ENCODE measurements at regions of chr17 and their contacts with region 1.

Region 1: DNA sequence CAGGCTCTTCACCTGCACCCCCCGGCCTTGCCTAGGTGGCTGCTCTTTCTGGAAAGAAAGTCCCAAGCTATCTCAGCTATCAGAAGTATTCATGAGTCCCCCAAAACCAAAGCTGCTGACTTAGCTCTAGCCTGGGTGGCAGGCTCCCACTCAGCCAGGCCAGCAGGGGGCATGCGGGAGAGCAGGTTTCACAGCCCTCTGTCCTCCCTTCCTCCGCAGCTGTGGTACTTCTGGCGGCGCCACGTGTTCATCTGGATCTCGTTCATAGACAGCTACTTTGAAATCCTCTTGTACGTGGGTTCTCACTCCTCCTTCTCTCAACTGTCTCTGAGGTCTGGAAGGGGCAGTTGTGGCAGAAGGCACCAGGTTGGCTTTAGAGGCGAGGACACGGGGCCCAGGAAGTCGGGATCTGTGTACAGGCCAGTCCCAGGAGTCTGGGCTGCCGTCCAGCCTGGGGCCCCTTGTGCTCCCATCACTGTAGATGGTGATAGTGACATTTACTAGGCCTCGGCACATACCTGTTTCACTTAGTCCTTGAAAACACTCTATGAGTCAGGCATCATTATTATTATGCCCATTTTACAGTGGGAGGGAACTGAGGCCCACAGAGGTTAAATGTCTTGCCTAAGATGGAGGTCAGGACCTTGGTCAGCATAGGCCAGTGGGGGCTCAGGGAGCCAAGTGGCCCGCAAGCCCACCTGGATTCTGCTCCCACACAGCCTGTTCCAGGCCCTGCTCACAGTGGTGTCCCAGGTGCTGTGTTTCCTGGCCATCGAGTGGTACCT is 12.9 kb downstream of the TRPV2 start:
- DNase-seq: peak; percentile 64
- H3K4me3 Mint-ChIP-seq: no peak overlapping the region
- H3K27ac Mint-ChIP-seq: no peak overlapping the region
- H3K4me1 Mint-ChIP-seq: peaks cover 2% of the 10 kb centered on the region
- H3K27me3 Mint-ChIP-seq: no peaks in the 10 kb centered on the region

Region 2: GRCh38 chr17:16380640-16381495 is 47.4 kb before region 1 on chr17 and contains the start of gene UBB:
- CTCF ChIA-PET with region 1: no interaction called
- intact Hi-C with region 1: no loop called
- DNase-seq: peak; percentile 96
- H3K4me3 Mint-ChIP-seq: peak within 1 kb of the TSS; percentile 90
- H3K27ac Mint-ChIP-seq: peak within 1 kb of the TSS; percentile 96
- H3K4me1 Mint-ChIP-seq: peaks cover 35% of the 10 kb centered on the region
- H3K27me3 Mint-ChIP-seq: no peaks in the 10 kb centered on the region
- total RNA-seq, gene UBB: 1,579 to 1,628 TPM

Region 3: DNA sequence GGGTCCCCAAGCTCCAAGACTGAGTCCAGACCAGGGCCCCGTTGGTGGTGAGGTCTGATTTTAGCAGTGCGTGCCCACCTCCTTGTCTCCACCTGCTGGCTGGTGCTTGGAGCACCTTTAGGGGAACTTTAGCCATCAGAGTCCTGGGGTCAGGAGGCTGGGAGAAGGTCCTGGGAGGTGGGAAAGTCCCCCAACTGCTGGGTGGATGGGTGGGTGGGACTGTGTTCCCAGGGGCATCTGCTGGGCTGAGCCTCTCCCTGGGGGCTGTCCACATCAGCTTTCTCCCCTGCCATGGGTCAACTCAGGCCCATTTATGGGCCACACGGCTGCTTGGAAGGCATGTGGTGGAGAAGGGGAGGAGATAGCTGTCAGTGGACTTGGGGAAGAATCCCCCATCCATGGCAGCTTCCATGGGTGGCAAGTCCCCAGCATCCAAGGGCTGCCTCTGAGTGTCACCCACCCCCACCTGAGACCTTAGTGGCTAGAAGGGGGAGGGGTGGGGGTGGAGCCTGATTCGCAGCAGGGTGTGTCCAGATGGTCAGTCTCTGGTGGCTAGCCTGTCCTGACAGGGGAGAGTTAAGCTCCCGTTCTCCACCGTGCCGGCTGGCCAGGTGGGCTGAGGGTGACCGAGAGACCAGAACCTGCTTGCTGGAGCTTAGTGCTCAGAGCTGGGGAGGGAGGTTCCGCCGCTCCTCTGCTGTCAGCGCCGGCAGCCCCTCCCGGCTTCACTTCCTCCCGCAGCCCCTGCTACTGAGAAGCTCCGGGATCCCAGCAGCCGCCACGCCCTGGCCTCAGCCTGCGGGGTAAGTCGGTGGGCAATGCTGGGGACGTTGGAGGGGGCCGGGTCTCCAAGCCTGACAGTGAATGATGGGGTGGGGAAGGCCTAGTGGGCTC is 13.0 kb before region 1 on chr17 and contains the start of gene TRPV2:
- CTCF ChIA-PET with region 1: interaction called, 13 read pairs
- intact Hi-C with region 1: no loop called
- DNase-seq: peak; percentile 67
- H3K4me3 Mint-ChIP-seq: peak within 1 kb of the TSS; percentile 98
- H3K27ac Mint-ChIP-seq: peak within 1 kb of the TSS; percentile 100
- H3K4me1 Mint-ChIP-seq: peaks cover 43% of the 10 kb centered on the region
- H3K27me3 Mint-ChIP-seq: no peaks in the 10 kb centered on the region
- total RNA-seq, gene TRPV2: 23.7 to 24.8 TPM